Cardiac septum (tissue), 1 donor: ENCODE measurements at regions of chr6 and their contacts with region 1.

Region 1: DNA sequence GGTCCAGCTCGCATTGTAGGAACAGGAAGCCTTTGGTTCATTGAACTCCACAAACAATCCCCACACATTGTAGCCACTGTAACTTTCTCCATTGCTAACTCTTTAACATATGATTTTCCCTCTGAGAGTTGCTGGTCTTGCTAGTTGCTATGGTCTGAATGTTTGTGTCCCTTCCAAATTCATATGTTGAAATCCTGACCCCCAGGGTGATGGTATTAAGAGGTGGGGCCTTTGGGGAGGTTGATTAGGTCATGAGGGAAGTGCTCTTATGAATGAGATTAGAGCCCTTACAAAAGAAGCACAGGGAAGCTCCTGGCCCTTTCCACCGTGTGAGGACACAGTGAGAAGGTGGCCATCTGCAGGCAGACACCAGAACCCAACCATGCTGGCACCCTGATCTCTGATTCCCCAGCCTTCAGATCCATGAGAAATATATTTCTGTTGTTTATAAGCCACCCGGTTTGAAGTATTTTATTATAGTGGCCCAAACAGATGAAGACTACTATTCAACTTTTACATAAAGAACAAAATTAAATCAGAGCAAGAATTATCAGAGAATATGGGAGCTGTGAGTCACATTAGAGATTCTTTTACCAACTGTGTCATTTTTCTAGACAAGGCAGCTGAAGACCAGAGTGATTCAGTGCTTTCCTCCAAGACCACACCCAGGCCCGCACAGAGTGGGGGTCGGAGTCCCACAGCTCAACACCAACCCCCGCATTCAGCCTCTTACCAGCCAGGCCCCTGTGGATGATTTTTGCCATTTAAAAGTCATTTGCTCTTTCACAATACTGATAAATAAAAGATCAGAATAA is 143.0 kb downstream of the SAMD5 start:
- DNase-seq: no peak

Region 2: GRCh38 chr6:147438758-147439528 is 212.5 kb before region 1 on chr6:
- intact Hi-C with region 1: no loop called
- DNase-seq: no peak

Region 3: GRCh38 chr6:148166339-148166968 is 515.0 kb after region 1 on chr6:
- intact Hi-C with region 1: loop called (anchors 10 kb)
- DNase-seq: no peak